ENCODE measurements at regions of chr5 and their contacts with region 1.

Region 1: GRCh38 chr5:119470851-119471451 is 18.7 kb downstream of the HSD17B4 start:
- DNase-seq: peak; percentile 33
- ATAC-seq: no peak
- H3K4me3 Mint-ChIP-seq: no peak overlapping the region
- H3K27ac Mint-ChIP-seq: no peak overlapping the region
- H3K4me1 Mint-ChIP-seq: peaks cover 9% of the 10 kb centered on the region
- H3K27me3 Mint-ChIP-seq: no peaks in the 10 kb centered on the region

Region 2: DNA sequence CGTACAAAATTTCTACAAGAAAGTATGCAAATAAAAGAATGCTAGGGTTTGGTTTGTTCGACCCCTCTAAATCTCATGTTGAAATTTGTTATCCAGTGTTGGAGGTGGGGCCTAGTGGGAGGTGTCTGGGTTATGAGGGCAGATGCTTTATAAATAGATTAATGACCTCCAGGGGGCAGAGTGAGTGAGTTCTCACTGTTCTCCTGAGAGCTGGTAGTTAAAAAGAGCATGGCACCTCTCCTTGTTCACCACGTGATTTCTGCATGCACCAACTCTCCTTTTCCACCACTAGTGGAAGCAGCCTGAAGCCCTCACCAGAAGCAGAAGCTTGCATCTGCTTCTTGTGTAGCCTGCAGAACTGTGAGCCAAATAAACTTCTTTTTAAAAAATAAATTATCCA is 108.0 kb after region 1 on chr5:
- CTCF ChIA-PET with region 1: no interaction called
- POLR2A ChIA-PET with region 1: no interaction called
- intact Hi-C with region 1: no loop called
- DNase-seq: peak; percentile 6
- ATAC-seq: peak; percentile 58
- H3K4me3 Mint-ChIP-seq: no peak overlapping the region
- H3K27ac Mint-ChIP-seq: no peak overlapping the region
- H3K4me1 Mint-ChIP-seq: no peaks in the 10 kb centered on the region
- H3K27me3 Mint-ChIP-seq: no peaks in the 10 kb centered on the region

Region 3: DNA sequence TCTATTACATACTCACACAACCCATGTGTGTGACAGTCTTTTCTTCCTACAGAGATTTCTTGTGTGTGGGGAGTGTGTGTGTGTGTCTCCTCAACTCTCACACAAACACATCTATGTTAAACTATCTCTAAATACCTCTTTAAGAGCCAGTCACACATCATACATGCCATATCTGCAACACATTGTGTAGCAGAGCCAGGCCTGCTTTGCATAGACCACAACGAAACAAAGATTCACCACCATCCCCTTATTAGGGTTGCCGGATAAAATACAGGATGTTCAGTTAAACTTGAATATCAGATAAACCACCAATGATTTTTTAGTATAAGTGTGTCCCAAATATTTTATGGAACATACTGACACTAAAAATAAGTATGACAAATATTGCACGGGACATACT is 160.7 kb after region 1 on chr5:
- CTCF ChIA-PET with region 1: no interaction called
- POLR2A ChIA-PET with region 1: no interaction called
- intact Hi-C with region 1: no loop called
- DNase-seq: no peak
- ATAC-seq: no peak
- H3K4me3 Mint-ChIP-seq: no peak overlapping the region
- H3K27ac Mint-ChIP-seq: no peak overlapping the region
- H3K4me1 Mint-ChIP-seq: no peaks in the 10 kb centered on the region
- H3K27me3 Mint-ChIP-seq: peaks cover 11% of the 10 kb centered on the region

Region 4: GRCh38 chr5:119743927-119744326 is 273.0 kb after region 1 on chr5:
- CTCF ChIA-PET with region 1: interaction called, 3 read pairs
- POLR2A ChIA-PET with region 1: no interaction called
- intact Hi-C with region 1: loop called (anchors 1 to 10 kb)
- DNase-seq: peak; percentile 10
- ATAC-seq: peak; percentile 51
- H3K4me3 Mint-ChIP-seq: no peak overlapping the region
- H3K27ac Mint-ChIP-seq: no peak overlapping the region
- H3K4me1 Mint-ChIP-seq: no peaks in the 10 kb centered on the region
- H3K27me3 Mint-ChIP-seq: peaks cover 2% of the 10 kb centered on the region

Region 5: GRCh38 chr5:120457839-120458507 is 987.0 kb after region 1 on chr5:
- CTCF ChIA-PET with region 1: no interaction called
- POLR2A ChIA-PET with region 1: no interaction called
- intact Hi-C with region 1: loop called in 1 of 2 experiments (anchors 10 kb)
- DNase-seq: peak; percentile 67
- ATAC-seq: peak; percentile 64
- H3K4me3 Mint-ChIP-seq: peak overlapping the region; percentile 18
- H3K27ac Mint-ChIP-seq: no peak overlapping the region
- H3K4me1 Mint-ChIP-seq: peaks cover 2% of the 10 kb centered on the region
- H3K27me3 Mint-ChIP-seq: peaks cover 11% of the 10 kb centered on the region

Measured in activated CD4-positive, alpha-beta T cell treated with anti-CD3 and anti-CD28 coated beads for 36 hours (primary cell).